GM10248 (cell line): ENCODE measurements at regions of chr12 and their contacts with region 1.

Region 1: DNA sequence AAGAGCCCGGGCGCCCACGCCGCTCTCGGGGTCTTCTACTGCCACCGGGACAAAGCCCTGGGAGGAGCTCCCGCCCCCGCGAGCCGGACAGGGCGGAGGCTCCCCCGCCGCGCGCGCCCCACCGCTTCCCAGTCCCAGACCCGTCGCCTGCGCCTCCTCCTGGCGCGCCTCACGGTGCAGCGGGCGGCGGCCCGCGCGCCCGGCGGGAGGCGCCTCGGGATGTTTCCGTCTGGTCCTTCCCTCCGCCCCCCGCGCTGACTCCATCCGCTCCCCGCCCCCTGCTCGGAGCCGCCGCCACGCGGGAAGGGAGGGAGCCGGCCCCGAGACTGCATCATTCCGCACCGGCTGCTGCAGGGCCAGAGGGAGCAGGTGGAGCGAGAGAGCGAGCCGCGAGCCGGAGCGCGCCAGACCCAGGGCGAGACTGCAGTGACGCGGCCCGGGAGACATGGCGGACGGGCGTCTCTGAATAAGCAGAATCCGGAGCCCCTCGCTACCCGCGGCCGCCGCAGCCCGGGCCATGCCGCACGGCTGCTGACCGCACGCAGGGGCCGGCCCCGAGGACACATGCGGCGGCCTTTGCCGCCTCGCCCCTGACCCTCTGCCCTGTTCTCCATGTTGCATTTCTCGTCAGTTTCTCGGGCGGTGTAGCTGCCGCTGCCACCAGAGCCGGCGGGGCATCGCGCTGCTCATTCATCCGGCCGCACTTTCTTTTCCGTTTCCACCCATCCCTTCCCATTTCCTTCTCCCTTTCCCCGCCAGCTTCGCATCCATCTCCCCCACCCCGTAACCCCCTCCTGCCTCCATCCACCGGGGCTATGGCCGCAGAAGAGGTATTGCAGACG is at the start of gene BICD1:
- DNase-seq: peak; percentile 87
- CTCF ChIP-seq: peak; percentile 35

Region 2: GRCh38 chr12:31557707-31558106 is 549.0 kb before region 1 on chr12:
- CTCF ChIA-PET with region 1: no interaction called
- POLR2A ChIA-PET with region 1: interaction called, 11 read pairs
- DNase-seq: no peak
- CTCF ChIP-seq: no peak

Region 3: GRCh38 chr12:31659087-31659933 is 447.4 kb before region 1 on chr12 and contains the start of gene ETFBKMT:
- CTCF ChIA-PET with region 1: interaction called, 10 read pairs
- POLR2A ChIA-PET with region 1: no interaction called
- DNase-seq: peak; percentile 92
- CTCF ChIP-seq: no peak

Region 4: GRCh38 chr12:32062881-32063280 is 43.9 kb before region 1 on chr12:
- CTCF ChIA-PET with region 1: interaction called, 13 read pairs
- POLR2A ChIA-PET with region 1: no interaction called
- DNase-seq: no peak
- CTCF ChIP-seq: no peak

Region 5: DNA sequence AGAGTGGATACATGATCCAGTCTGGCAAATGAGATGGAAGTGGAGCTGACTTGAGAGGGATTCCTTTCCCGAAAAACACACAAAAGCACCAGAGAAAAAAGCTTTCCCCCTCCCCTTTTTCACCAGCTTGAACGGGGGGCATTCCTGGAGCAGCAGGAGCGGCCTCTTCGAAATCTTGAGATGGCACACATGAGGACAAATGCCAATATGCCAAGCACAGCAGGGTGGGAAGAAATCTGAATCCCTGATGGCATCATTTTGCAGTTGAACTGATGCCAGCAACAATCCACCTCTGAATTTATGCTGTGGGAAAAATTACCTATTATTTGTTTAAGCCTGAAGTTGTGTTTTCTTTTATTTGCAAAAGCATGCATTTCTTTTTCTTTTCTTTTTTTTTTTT is 29.8 kb before region 1 on chr12:
- CTCF ChIA-PET with region 1: no interaction called
- POLR2A ChIA-PET with region 1: no interaction called
- DNase-seq: no peak
- CTCF ChIP-seq: no peak

Region 6: DNA sequence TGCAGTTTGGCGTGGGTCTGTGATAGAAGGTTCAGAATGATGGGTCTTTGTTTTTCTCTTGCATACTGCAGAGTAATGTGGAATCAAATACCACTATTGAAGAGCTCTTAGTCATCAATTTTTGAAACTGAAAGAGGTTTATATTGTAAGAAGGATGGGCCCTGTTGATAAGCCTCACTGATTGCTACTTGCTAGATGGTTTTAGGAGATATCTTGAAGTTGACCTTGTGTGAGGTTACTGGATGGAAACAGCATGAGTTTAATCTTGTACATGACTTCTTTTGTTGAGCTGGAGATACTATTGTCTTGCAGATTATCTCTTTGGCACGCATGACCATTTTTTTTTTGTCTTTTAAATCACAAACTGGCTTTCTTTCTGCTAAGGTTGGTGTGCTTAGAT is 13.7 kb after region 1 on chr12:
- CTCF ChIA-PET with region 1: interaction called, 11 read pairs
- POLR2A ChIA-PET with region 1: no interaction called
- DNase-seq: peak; percentile 56
- CTCF ChIP-seq: no peak